Activated T-helper 2 cell treated with anti-CD3 and anti-CD28 coated beads, Interferon-gamma antibody, Interleukin-2, Interleukin-4, amounts not matched to agents 10 μg/mL and 5 μg/mL and 100 μg/mL, durations not matched to agents 14 hours and 24 hours and 36 hours (primary cell): ENCODE measurements at regions of chr10 and their contacts with region 1.

Region 1: GRCh38 chr10:73644015-73644743 is 2.9 kb upstream of the MYOZ1 start:
- DNase-seq: peak; percentile 44
- H3K4me3 Mint-ChIP-seq: no peak overlapping the region
- H3K27ac Mint-ChIP-seq: peak overlapping the region; percentile 25
- H3K4me1 Mint-ChIP-seq: peaks cover 20% of the 10 kb centered on the region
- H3K27me3 Mint-ChIP-seq: peaks cover 6% of the 10 kb centered on the region

Region 2: DNA sequence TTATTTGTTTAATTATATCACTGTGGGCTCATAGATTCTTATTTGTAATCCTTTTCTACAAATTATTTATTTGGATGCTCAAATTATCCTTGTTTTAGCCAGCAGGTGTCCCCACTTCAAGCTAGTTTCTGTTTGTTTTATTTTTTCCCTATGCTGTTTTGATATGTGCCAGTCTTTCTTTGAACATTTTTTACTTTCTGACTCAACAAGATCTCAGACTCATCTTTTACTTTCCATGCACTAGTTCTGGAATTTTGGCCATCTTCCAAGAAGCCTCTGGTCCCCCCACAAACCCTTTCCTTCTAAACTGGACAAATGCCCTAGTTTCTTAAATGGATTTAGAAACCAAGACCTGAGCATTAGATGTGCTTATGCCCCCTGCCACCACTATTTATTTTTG is 380.2 kb before region 1 on chr10:
- intact Hi-C with region 1: loop called (anchors 2 kb)
- DNase-seq: no peak
- H3K4me3 Mint-ChIP-seq: no peak overlapping the region
- H3K27ac Mint-ChIP-seq: no peak overlapping the region
- H3K4me1 Mint-ChIP-seq: peaks cover 9% of the 10 kb centered on the region
- H3K27me3 Mint-ChIP-seq: peaks cover 16% of the 10 kb centered on the region

Region 3: GRCh38 chr10:73358331-73359279 is 285.6 kb before region 1 on chr10 and contains the start of gene CFAP70:
- intact Hi-C with region 1: loop called (anchors 10 kb)
- DNase-seq: peak; percentile 90
- H3K4me3 Mint-ChIP-seq: peak within 1 kb of the TSS; percentile 89
- H3K27ac Mint-ChIP-seq: peak within 1 kb of the TSS; percentile 77
- H3K4me1 Mint-ChIP-seq: peaks cover 13% of the 10 kb centered on the region
- H3K27me3 Mint-ChIP-seq: peaks cover 8% of the 10 kb centered on the region
- total RNA-seq, gene CFAP70: 0.41 and 0.43 TPM in 2 replicates

Region 4: DNA sequence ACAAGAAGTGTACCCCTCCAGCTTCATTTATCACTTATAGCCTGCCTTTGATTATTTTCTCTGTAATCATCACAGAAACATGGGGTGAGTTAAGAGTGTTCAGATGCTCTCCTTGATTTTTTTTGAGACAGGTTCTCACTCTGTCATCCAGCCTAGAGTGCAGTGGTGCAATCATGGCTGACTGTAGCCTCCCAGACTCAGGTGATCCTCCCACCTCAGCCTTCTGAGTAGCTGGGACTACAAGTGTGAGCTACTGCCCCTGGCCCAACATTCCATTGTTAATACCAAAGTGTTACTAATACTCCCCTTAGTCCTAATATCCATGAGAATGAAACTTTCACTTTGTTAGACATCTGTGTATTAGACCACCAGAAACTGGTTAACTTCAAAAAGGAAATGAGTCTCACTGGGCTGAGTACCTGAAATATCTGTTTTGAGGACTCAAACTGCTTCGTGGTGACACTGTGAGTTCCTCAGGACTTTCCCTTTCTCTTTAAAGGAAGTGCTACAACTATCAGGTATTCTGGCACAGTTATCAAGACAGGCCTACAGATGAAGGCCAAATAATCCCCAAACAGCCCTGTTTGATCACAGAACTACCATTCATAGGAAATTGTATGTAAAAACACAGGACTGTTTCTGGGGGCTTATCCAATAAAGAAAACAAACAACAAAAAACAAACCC is 265.0 kb before region 1 on chr10:
- intact Hi-C with region 1: no loop called
- DNase-seq: no peak
- H3K4me3 Mint-ChIP-seq: no peak overlapping the region
- H3K27ac Mint-ChIP-seq: peak overlapping the region; percentile 81
- H3K4me1 Mint-ChIP-seq: peaks cover 12% of the 10 kb centered on the region
- H3K27me3 Mint-ChIP-seq: no peaks in the 10 kb centered on the region

Region 5: GRCh38 chr10:73529089-73529832 is 114.9 kb before region 1 on chr10:
- intact Hi-C with region 1: loop called (anchors 1 kb)
- DNase-seq: peak; percentile 25
- H3K4me3 Mint-ChIP-seq: no peak overlapping the region
- H3K27ac Mint-ChIP-seq: no peak overlapping the region
- H3K4me1 Mint-ChIP-seq: no peaks in the 10 kb centered on the region
- H3K27me3 Mint-ChIP-seq: peaks cover 6% of the 10 kb centered on the region

Region 6: GRCh38 chr10:73746721-73747120 is 102.5 kb after region 1 on chr10:
- intact Hi-C with region 1: no loop called
- DNase-seq: no peak
- H3K4me3 Mint-ChIP-seq: peak overlapping the region; percentile 47
- H3K27ac Mint-ChIP-seq: peak overlapping the region; percentile 45
- H3K4me1 Mint-ChIP-seq: peaks cover 39% of the 10 kb centered on the region
- H3K27me3 Mint-ChIP-seq: no peaks in the 10 kb centered on the region

Region 7: GRCh38 chr10:74058658-74059057 is 414.5 kb after region 1 on chr10:
- intact Hi-C with region 1: no loop called
- DNase-seq: no peak
- H3K4me3 Mint-ChIP-seq: no peak overlapping the region
- H3K27ac Mint-ChIP-seq: no peak overlapping the region
- H3K4me1 Mint-ChIP-seq: peaks cover 49% of the 10 kb centered on the region
- H3K27me3 Mint-ChIP-seq: no peaks in the 10 kb centered on the region